ENCODE measurements at regions of chr7 and their contacts with region 1.

Region 1: GRCh38 chr7:149125863-149126661 is at the start of gene ZNF425:
- DNase-seq: peak; percentile 72
- H3K4me3 ChIP-seq: peak within 1 kb of the TSS; percentile 91
- H3K27ac ChIP-seq: peak within 1 kb of the TSS; percentile 82
- H3K27me3 ChIP-seq: no peaks in the 10 kb centered on the region
- CTCF ChIP-seq: peak; percentile 90
- polyA plus RNA-seq, gene ZNF425: 1.8 and 2.1 TPM in 2 replicates

Region 2: DNA sequence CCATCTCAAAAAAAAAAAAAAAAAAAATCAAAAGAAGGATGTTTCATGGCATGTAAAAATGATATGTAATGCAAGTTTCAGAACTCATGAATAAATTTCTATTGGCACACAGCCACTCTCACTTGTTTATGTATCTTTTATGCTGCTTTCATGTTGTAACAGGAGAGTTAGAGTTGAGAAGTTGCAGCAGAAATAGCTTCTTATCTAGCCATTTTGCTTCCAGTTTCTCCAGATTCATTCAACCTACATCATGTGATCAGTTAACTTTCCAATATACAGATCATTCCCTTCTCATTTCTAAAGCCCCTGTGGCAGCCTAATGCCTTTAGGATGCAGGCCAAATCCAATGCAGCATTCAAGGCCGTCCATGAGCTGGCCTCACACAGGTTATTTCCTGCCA is 65.9 kb before region 1 on chr7:
- CTCF ChIA-PET with region 1: interaction called, 21 read pairs
- POLR2A ChIA-PET with region 1: interaction called, 12 read pairs
- DNase-seq: no peak
- H3K4me3 ChIP-seq: no peak overlapping the region
- H3K27ac ChIP-seq: no peak overlapping the region
- H3K27me3 ChIP-seq: no peaks in the 10 kb centered on the region
- CTCF ChIP-seq: no peak

Region 3: DNA sequence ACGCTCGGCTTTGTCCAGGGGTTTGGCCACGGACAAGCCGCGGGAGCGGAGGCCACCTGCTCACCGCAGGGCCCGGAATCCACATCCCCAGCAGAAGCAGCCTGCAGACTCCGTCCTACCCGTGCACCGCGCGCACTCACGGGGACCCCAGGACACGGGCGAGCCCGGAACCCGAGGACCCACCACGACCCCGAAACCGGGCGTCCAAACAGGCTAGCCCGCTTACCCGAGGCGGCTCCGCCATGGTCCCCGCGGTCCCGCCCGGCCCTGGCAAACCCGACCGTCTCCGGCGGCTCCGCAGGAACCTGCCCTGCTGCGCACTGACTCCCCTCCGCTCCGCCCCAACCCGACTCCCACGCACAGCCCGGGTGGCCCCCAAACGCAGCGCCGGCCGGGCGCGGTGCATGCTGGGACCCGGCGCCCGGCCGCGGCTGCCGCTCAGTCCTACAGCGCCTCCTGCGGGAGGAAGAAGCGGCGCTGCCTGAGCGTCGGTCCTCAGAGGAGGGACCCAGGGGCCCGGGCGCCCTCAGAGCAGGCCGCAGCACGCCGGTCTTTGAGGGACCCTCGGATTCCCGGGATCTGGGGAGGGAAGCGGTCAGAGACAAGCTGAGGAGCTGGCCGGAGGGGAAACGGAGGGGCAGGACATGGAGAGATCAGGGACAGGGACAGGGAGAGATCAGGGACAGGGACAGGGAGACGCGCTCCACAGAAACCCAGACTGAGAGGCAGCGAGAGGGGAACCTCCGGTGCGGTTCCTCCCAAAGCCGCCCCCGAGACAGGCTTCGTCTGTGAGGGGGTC is 35.5 kb before region 1 on chr7 and contains the start of gene ZNF786:
- CTCF ChIA-PET with region 1: interaction called, 12 read pairs
- POLR2A ChIA-PET with region 1: interaction called, 4 read pairs
- DNase-seq: peak; percentile 61
- H3K4me3 ChIP-seq: peak within 1 kb of the TSS; percentile 79
- H3K27ac ChIP-seq: peak within 1 kb of the TSS; percentile 87
- H3K27me3 ChIP-seq: no peaks in the 10 kb centered on the region
- CTCF ChIP-seq: peak; percentile 83
- polyA plus RNA-seq, gene ZNF786: 2.2 TPM in 2 replicates

Region 4: GRCh38 chr7:149136118-149136517 is 10.1 kb after region 1 on chr7:
- CTCF ChIA-PET with region 1: interaction called, 20 read pairs
- POLR2A ChIA-PET with region 1: interaction called, 5 read pairs
- DNase-seq: no peak
- H3K4me3 ChIP-seq: no peak overlapping the region
- H3K27ac ChIP-seq: no peak overlapping the region
- H3K27me3 ChIP-seq: no peaks in the 10 kb centered on the region
- CTCF ChIP-seq: no peak